ENCODE measurements at regions of chr2 and their contacts with region 1.

Region 1: DNA sequence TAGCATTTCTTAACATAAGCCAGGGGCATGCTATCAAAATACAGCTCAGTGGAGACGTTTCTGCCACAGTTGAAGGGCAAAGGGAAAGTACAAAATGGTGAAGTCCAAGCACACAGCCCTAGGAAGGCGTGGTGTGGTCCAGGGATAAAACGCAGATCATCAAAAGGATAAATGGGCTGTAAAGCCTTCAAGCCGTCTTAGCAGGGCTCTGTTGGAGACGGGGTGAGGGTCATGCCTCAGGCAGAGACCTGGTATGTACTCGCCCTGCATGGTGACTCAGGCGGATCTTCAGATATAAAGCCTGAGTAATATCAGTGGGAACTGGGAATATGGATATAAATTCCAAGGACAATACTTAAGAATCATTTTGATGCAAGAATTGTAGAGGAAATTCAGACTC is 61.2 kb downstream of the NGEF start:
- DNase-seq: no peak

Region 2: DNA sequence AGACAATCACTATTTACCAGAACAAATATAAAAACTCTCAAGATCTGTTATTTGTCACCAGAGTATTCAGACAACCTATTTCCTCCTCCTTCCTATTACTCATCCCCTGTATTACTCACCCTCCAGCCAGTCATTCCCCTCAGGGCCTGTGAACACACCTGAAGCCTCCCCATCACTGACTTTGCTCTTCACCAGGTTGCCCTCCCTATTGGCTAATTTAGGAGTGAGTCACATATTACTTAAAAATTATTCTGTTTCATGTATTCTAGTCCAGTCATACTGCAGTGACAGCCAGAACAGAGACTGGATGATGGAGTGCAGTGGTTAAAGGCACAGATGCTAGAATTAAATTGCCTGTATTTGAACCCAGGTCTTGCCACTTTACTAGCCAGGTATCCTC is 295.9 kb after region 1 on chr2:
- in situ Hi-C with region 1: loop called (anchors 25 kb)
- DNase-seq: no peak